ENCODE measurements at regions of chr18 and their contacts with region 1.

Region 1: GRCh38 chr18:74370115-74370514 is 54.5 kb downstream of the C18orf63 start:
- DNase-seq: no peak
- H3K4me3 ChIP-seq: no peak overlapping the region
- H3K27ac ChIP-seq: no peak overlapping the region
- H3K4me1 ChIP-seq: no peaks in the 10 kb centered on the region
- H3K27me3 ChIP-seq: peaks cover 0 to 8% (median 4%) of the 10 kb centered on the region in 5 experiments

Region 2: DNA sequence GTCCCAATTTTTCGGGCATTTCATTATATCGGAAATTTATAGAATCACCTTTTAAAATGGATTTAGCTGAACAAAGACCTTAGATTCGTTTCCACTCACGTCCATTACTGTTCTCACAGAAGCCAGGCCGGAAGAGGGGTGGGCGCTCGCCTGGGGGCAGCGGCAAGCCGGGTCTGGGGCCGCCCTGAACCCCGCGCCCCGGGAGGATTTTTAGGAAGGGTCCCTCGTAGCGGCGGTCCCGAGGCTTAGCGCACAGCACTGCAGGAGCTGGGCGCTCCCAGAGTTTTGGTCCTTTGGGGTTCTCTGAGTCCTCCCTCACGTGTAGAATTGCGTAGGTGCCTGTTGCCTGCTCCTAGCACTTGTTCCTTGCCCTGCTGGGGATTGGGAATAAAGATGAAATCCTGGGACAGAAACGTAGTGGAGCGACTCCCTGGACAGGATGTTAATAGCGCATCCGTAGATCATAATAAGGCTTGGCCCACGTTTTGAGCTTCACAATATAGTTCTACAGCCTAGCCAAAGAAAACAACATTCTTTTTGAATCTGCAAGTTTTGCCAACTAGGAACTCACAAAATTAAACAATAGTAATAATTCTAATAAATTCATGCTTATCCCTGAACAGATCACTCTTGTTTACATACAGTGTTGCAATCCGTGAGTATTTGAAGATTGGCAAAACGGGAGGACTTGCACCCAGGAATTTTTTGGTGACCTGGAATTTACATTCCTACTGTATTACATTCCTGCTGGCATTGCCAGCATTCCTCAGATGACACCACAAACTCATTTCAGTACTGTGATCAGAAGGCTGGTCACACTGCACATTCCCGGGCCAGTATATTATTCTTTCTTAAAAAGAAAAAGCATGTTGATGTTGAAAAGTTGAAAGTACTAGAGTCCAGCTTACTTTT is 53.6 kb before region 1 on chr18:
- CTCF ChIA-PET with region 1: no interaction called
- POLR2A ChIA-PET with region 1: no interaction called
- DNase-seq: no peak
- H3K4me3 ChIP-seq: no peak overlapping the region
- H3K27ac ChIP-seq: no peak overlapping the region
- H3K4me1 ChIP-seq: no peaks in the 10 kb centered on the region
- H3K27me3 ChIP-seq: no peaks in the 10 kb centered on the region

Region 3: GRCh38 chr18:74353169-74353775 is 16.8 kb before region 1 on chr18:
- CTCF ChIA-PET with region 1: interaction called, 17 read pairs
- POLR2A ChIA-PET with region 1: no interaction called
- DNase-seq: peak; percentile 72 to 81 (median 74)
- H3K4me3 ChIP-seq: no peak overlapping the region
- H3K27ac ChIP-seq: no peak overlapping the region
- H3K4me1 ChIP-seq: peaks cover 0 to 9% (median 1%) of the 10 kb centered on the region in 4 experiments
- H3K27me3 ChIP-seq: no peaks in the 10 kb centered on the region